Mammary epithelial cell (primary cell): ENCODE measurements at regions of chr10 and their contacts with region 1.

Region 1: GRCh38 chr10:96568402-96568801 is 18.4 kb downstream of the TM9SF3 start:
- DNase-seq: no peak
- H3K4me3 ChIP-seq: no peak overlapping the region
- H3K27ac ChIP-seq: no peak overlapping the region
- H3K4me1 ChIP-seq: no peaks in the 10 kb centered on the region
- H3K27me3 ChIP-seq: no peaks in the 10 kb centered on the region
- CTCF ChIP-seq: no peak

Region 2: GRCh38 chr10:94916423-94916822 is 1652.0 kb before region 1 on chr10:
- CTCF ChIA-PET with region 1: no interaction called
- dilution Hi-C with region 1: no loop called
- in situ Hi-C with region 1: no loop called
- intact Hi-C with region 1: no loop called
- DNase-seq: no peak
- H3K4me3 ChIP-seq: no peak overlapping the region
- H3K27ac ChIP-seq: no peak overlapping the region
- H3K4me1 ChIP-seq: no peaks in the 10 kb centered on the region
- H3K27me3 ChIP-seq: no peaks in the 10 kb centered on the region
- CTCF ChIP-seq: no peak

Region 3: GRCh38 chr10:96556003-96556402 is 12.4 kb before region 1 on chr10:
- CTCF ChIA-PET with region 1: no interaction called
- dilution Hi-C with region 1: no loop called
- in situ Hi-C with region 1: no loop called
- intact Hi-C with region 1: loop called (anchors 2 kb)
- DNase-seq: no peak
- H3K4me3 ChIP-seq: no peak overlapping the region
- H3K27ac ChIP-seq: no peak overlapping the region
- H3K4me1 ChIP-seq: no peaks in the 10 kb centered on the region
- H3K27me3 ChIP-seq: no peaks in the 10 kb centered on the region
- CTCF ChIP-seq: peak; percentile 21 to 48

Region 4: DNA sequence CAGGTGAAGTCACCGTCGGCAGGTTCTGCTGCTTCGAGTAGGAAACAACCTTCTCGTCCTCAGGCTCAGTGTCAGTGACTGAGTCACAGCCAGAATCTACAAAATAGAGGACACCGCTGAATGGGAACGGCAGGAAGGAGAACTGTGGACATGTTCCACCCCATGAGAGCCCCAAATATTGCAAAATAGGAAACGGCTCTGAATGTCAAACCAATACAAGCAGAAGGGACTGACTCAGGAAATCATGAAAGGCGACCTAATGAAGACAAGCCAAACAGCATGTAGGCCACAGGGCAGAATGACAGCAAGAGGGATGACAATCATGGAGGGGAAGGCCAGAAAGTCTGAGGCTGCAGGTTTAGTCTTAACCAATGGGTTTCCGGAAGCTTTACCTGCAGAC is 88.4 kb after region 1 on chr10:
- CTCF ChIA-PET with region 1: no interaction called
- dilution Hi-C with region 1: no loop called
- in situ Hi-C with region 1: no loop called
- intact Hi-C with region 1: no loop called
- DNase-seq: no peak
- H3K4me3 ChIP-seq: no peak overlapping the region
- H3K27ac ChIP-seq: no peak overlapping the region
- H3K4me1 ChIP-seq: no peaks in the 10 kb centered on the region
- H3K27me3 ChIP-seq: no peaks in the 10 kb centered on the region
- CTCF ChIP-seq: no peak